ENCODE measurements at regions of chr19 and their contacts with region 1.

Region 1: DNA sequence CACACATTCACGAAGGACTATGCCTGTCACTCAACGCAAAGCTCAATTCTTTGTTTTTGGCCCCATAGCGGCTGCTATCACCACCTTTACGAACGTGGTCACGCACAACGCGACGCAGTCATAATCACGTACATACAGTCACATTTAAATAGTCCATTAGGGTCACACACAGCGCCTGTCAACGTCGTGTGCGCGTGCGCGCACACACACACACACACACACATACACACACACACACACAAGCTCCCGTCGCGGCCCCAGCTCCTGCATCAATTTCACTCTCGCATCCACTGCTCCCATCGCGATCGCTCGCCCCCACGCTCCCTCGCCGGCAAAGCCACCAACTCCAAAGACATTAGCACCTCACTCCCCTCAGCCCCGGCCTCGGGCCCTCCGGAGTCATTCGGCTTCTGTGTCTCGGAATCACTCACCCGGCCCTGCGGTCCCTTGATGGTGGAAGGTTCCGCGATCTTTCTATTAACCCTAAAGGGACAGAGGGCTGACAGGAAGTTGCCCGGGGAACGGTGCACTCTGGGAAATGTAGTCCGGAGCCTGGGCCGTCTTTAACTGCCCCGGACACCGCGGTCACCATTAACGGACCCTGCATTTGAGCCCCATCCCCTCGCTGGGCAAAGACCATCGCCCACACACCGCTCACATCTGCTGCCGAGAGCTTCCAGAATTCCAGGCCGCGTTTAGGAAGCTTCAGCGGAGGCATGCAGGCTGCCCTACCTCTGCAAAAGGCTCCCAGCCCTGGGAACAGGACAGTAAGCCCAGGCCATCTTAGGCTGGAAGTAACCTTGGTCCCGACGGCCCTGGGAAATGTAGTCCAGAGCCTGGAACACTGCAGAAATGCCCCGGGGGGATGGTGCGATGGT is at the start of gene ZNF790:
- DNase-seq: peak; percentile 74 to 85
- ATAC-seq: peak; percentile 98 to 99
- H3K4me3 ChIP-seq: peak within 1 kb of the TSS; percentile 68 to 87 (median 79)
- H3K27ac ChIP-seq: peak within 1 kb of the TSS; percentile 74 to 90 (median 86)
- H3K4me1 ChIP-seq: peaks cover 8 to 9% of the 10 kb centered on the region in 2 donors
- H3K27me3 ChIP-seq: no peaks in the 10 kb centered on the region
- CTCF ChIP-seq: no peak
- POLR2A ChIP-seq: no peak
- total RNA-seq, gene ZNF790: 2.4 to 8.1 (median 5.2) TPM

Region 2: DNA sequence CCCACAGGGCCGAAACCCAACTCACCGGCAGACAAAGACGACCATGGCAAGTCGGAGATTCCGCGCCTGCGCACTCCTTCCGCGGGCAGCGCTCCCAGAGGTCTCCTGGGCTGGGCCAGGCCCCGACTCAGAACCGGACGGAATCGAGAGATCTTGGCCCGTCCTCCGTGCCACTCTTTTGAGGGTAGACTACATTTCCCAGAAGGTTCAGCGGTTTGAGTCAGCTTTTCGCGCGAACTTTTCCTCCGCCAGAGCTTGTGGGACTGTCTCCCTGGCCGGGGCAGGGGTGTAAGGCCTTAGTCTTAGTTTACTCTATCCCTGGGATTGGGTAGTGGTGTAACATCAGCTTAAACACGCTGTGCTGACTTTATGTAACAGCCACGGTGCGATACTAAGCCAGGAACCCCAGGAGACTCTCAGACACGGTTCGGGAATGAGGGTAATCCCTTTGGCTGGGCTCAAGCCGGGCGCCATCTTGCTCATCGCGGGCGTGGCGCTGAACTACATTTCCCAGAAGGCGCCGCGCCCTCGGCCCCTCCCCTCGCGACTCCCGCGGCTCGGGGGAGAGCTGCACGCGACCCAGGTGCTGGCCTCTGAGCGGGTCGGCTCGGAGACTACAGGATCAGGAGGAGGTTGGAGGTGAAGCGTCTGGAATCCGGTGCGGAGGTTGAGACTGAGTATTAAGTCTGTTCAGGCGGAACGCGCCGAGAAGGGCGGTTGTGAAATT is 309.8 kb before region 1 on chr19 and contains the start of gene ZNF260:
- in situ Hi-C with region 1: no loop called
- intact Hi-C with region 1: loop called (anchors 1 kb)
- DNase-seq: peak; percentile 96
- ATAC-seq: peak; percentile 99
- H3K4me3 ChIP-seq: peak within 1 kb of the TSS; percentile 71 to 83 (median 80)
- H3K27ac ChIP-seq: peak within 1 kb of the TSS; percentile 83 to 94 (median 90)
- H3K4me1 ChIP-seq: peaks cover 16 to 17% of the 10 kb centered on the region in 2 donors
- H3K27me3 ChIP-seq: no peaks in the 10 kb centered on the region
- CTCF ChIP-seq: no peak
- POLR2A ChIP-seq: peak; percentile 43 to 56
- total RNA-seq, gene ZNF260: 1.3 to 16.3 (median 3.2) TPM

Region 3: DNA sequence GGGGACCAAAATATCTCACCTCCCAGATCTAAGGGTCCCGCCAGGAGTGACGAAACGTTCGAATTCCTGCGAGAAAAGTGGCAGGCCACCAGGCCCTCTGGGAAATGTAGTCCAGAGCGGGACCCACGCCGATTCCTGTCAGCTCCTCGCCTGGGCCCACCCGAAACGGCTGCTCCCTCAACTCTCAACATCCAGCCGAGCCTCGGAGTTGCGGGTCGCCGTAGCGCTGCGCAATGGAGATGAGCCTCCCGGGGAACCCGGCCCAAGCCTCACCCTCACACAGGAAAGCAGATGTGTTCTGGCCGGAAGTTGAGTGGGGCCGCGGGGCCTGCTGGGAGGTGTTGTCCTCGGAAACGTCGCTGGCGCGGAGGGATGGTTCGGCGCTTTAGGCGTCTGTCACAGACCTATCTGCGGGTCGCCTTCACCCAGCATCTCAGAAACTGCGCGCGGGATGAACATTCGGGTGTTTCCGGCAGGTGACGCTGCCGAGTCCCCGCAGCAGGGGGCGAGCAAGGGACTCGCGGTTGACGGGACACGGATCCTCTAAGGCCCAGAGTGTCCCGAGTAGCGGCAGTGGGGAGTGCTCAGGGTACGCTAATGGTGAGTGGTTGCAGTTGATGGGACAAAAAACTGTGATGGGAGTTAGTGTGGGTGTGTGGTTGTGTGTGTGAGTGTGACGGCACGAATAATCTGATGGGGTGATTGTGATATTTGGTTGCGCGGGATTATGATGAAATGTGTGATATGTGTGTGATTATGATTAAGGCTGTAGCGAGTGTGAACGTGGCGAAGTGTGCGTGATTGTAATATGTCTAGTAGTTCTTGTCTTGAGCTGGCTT is 78.1 kb after region 1 on chr19 and contains the starts of genes ZNF568 and ZNF829:
- in situ Hi-C with region 1: no loop called
- intact Hi-C with region 1: loop called (anchors 2 kb)
- DNase-seq: peak; percentile 76 to 79
- ATAC-seq: peak; percentile 98
- H3K4me3 ChIP-seq: peak within 1 kb of the TSS; percentile 82 to 98 (median 83)
- H3K27ac ChIP-seq: peak within 1 kb of the TSS; percentile 92 to 97 (median 94)
- H3K4me1 ChIP-seq: peaks cover 8 to 12% of the 10 kb centered on the region in 2 donors
- H3K27me3 ChIP-seq: no peaks in the 10 kb centered on the region
- CTCF ChIP-seq: peak; percentile 32 to 64 (median 46)
- POLR2A ChIP-seq: peak in 1 of 2 donors; percentile 12
- total RNA-seq, gene ZNF568: 3.0 to 10.2 (median 5.4) TPM
- total RNA-seq, gene ZNF829: 0.97 to 1.5 (median 1.2) TPM